ENCODE measurements at regions of chr16 and their contacts with region 1.

Region 1: DNA sequence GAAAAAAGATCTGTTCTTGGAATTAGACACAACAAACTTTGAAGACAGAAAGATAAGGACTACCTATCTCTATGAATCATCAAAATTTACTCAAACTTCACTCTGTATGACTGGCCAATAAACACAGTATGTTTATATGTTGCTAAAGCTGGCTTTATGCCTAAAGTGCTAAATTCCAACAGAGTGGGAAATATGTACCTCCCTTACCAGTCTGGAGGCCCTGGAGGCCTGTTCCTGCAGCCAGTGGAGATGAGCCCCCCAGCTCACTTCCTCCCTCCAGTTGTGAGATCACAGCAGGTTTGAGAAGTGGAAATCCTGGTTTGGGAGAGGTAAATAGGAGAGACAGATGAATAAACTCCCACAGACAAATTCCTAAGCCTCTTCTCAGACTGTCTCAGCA is 9.0 kb downstream of the ZNF23 start:
- DNase-seq: no peak
- ATAC-seq: no peak
- H3K4me3 ChIP-seq: no peak overlapping the region
- H3K27ac ChIP-seq: no peak overlapping the region
- H3K4me1 ChIP-seq: no peaks in the 10 kb centered on the region
- H3K27me3 ChIP-seq: no peaks in the 10 kb centered on the region

Region 2: DNA sequence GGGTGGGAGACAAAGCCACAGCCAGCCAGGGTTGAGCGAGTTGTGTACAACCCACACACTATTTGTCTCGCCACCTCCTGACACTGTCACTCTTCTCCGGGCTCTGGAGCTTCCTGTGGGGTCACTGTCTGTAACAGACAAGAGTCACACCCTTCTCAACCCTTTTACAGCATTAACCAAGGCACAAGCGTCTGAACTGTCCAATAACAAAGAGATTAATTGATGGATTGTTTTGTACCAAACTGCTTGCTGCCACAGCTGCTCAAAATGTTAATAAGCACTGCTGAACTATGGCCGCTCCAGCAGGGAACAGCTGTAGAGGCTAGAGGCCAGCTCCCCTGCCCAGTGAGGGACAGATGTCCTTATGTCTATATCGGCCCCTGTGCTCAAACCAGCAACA is 197.3 kb before region 1 on chr16:
- intact Hi-C with region 1: no loop called
- DNase-seq: no peak
- ATAC-seq: no peak
- H3K4me3 ChIP-seq: no peak overlapping the region
- H3K27ac ChIP-seq: no peak overlapping the region
- H3K4me1 ChIP-seq: peaks cover 2% of the 10 kb centered on the region
- H3K27me3 ChIP-seq: no peaks in the 10 kb centered on the region

Region 3: GRCh38 chr16:71489122-71489521 is 36.1 kb after region 1 on chr16 and contains the start of gene ZNF19:
- intact Hi-C with region 1: loop called in 1 of 4 experiments (anchors 5 kb)
- DNase-seq: no peak
- ATAC-seq: no peak
- H3K4me3 ChIP-seq: no peak within 1 kb of the TSS
- H3K27ac ChIP-seq: no peak within 1 kb of the TSS
- H3K4me1 ChIP-seq: no peaks in the 10 kb centered on the region
- H3K27me3 ChIP-seq: no peaks in the 10 kb centered on the region
- total RNA-seq, gene ZNF19: 2.3 to 4.0 (median 3.2) TPM

Region 4: DNA sequence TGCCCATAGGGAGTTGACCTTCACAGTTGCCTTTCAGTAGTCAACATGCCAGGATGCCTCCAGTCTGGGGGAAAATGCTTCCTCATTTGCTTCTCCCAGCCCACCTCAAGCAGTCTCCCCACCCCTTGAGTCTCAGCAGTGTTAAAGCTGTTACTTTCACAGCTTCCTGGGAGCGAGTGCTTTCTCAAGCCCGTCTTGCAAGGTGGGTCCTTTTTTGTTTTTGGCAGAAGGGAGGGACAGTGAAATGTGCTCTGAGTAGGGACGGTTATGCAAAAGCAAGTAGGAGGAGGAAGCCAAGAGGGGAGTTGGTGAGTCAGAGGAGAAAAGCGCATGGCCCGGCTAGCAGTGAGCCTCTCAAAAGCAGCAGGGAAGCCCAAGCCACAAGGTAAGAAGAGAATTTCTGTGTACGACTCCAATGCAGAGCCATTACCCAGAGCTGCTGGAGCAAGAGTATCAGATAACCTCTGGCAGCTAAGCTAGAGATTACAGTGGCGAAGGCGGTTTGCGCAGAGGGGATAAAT is 73.1 kb after region 1 on chr16 and contains the start of gene CHST4:
- intact Hi-C with region 1: no loop called
- DNase-seq: no peak
- ATAC-seq: peak; percentile 59 to 73
- H3K4me3 ChIP-seq: no peak within 1 kb of the TSS
- H3K27ac ChIP-seq: no peak within 1 kb of the TSS
- H3K4me1 ChIP-seq: no peaks in the 10 kb centered on the region
- H3K27me3 ChIP-seq: no peaks in the 10 kb centered on the region
- total RNA-seq, gene CHST4: not detected

Measured in right cardiac atrium (tissue), 5 donors.